Activated CD8-positive, alpha-beta T cell treated with anti-CD3 and anti-CD28 coated beads for 36 hours (primary cell): ENCODE measurements at regions of chr2 and their contacts with region 1.

Region 1: DNA sequence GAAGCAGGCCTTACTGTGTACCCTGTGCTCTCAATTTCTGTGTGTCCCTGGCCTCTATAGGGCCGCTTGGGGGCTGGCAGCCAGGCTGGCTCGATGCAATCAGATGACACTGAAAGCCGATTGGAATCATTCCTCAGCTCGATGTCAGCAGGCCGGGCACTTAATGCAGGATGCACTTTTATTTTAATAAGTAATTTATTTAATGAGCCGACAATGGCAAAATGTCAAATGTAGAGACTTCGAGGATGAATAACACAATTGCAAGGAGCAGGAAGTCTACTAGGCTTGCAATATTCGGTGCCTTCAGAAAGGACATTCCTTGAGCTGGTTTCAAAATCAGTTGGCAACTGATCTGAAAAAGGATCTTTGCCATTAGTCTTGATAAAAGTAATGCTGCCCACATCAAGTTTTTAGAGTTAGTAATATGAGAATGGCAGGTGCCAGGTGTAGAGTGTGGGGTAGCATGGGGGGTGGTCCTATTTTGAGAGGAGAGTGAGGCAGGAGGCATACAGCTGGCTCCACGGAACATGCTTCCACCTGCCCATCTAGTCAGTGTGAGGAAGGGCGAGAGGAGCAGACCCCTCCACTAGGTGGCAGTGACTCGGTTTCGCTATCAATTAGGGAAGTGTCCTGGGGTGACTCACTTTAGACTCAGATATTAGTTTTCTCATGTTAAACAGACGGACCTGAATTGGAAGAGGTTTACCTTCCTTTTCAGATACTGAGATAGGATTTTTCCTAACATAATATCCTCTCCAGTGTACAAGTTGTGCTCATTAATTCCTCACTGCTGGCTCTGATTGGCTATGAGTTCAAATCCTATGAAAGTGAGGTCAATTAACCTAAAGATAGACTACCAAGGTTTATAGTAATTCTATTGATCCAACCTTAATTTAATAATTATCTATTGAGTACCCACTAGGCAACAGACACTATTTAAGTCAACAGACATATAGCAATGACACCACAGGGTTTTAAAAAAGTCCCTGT is 80.9 kb downstream of the NABP1 start:
- DNase-seq: peak; percentile 73
- ATAC-seq: peak; percentile 100
- H3K4me3 Mint-ChIP-seq: no peak overlapping the region
- H3K27ac Mint-ChIP-seq: no peak overlapping the region
- H3K4me1 Mint-ChIP-seq: peaks cover 5% of the 10 kb centered on the region
- H3K27me3 Mint-ChIP-seq: peaks cover 11% of the 10 kb centered on the region
- CTCF ChIP-seq: peak; percentile 69

Region 2: DNA sequence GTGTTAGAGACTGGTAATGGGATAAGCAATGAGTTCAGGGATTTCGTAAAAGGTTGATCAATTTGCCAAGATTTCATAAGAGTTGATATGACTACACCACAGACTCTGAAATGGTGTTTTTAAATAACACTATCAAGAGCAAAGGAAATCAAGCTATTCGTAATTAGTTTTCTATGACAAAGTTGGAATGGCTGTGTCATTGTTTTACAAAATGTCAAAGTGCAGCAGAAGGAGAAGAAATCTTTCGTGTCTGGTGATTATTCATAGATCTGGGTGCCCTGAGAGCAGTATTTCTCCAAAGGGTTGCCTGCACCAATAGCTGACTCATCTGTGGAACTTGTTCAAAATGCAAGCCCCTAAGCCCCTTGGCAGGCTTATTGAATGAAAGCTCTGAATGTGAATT is 10.8 kb before region 1 on chr2:
- CTCF ChIA-PET with region 1: interaction called, 11 read pairs
- POLR2A ChIA-PET with region 1: no interaction called
- intact Hi-C with region 1: no loop called
- DNase-seq: no peak
- ATAC-seq: no peak
- H3K4me3 Mint-ChIP-seq: no peak overlapping the region
- H3K27ac Mint-ChIP-seq: no peak overlapping the region
- H3K4me1 Mint-ChIP-seq: peaks cover 4% of the 10 kb centered on the region
- H3K27me3 Mint-ChIP-seq: peaks cover 22% of the 10 kb centered on the region
- CTCF ChIP-seq: no peak

Region 3: GRCh38 chr2:191811807-191812602 is 53.2 kb after region 1 on chr2:
- CTCF ChIA-PET with region 1: no interaction called
- POLR2A ChIA-PET with region 1: no interaction called
- intact Hi-C with region 1: no loop called
- DNase-seq: peak; percentile 52
- ATAC-seq: no peak
- H3K4me3 Mint-ChIP-seq: no peak overlapping the region
- H3K27ac Mint-ChIP-seq: no peak overlapping the region
- H3K4me1 Mint-ChIP-seq: no peaks in the 10 kb centered on the region
- H3K27me3 Mint-ChIP-seq: peaks cover 12% of the 10 kb centered on the region
- CTCF ChIP-seq: peak; percentile 63